PC-9 (cell line): ENCODE measurements at regions of chrX and their contacts with region 1.

Region 1: DNA sequence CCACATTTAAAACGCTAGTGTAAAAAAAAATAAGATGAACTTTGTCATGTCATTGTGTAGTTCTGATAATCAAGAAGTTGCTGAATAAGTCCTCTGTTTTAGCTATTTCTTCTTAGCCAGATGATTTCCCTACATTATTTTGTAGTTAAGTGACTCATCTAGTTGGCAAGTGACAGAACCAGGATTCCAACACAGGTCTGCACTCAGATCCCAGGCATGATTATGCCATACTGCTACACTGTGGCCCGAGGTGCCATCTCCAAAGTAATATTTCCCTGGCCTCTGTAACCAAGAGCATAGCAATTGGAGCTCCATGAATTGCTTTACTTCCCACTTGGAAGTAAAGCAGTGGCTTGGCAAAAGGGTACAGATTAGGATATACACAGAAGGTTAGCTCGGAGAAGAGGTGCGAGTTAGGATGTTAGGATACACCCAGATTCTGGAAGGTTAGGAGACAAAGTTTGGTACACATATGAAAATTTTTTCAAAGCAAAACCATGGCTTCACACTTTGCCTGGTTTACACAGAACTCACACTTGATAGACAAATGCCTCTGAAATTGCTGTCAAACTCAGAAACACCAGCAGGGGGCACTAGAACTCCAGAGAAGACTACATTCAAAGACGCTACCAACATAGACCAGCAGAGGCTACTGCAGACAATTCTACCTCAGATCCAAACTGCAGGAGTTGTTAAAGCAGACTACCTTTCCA is 41.4 kb downstream of the SRPX2 start:
- DNase-seq: peak; percentile 64 to 67
- H3K4me3 ChIP-seq: no peak overlapping the region
- H3K27ac ChIP-seq: no peak overlapping the region
- H3K4me1 ChIP-seq: peaks cover under 1% of the 10 kb centered on the region
- H3K27me3 ChIP-seq: no peaks in the 10 kb centered on the region
- CTCF ChIP-seq: peak; percentile 88

Region 2: GRCh38 chrX:99480728-99481127 is 1204.7 kb before region 1 on chrX:
- CTCF ChIA-PET with region 1: no interaction called
- POLR2A ChIA-PET with region 1: no interaction called
- intact Hi-C with region 1: no loop called
- DNase-seq: no peak
- H3K4me3 ChIP-seq: no peak overlapping the region
- H3K27ac ChIP-seq: no peak overlapping the region
- H3K4me1 ChIP-seq: no peaks in the 10 kb centered on the region
- H3K27me3 ChIP-seq: no peaks in the 10 kb centered on the region
- CTCF ChIP-seq: no peak

Region 3: GRCh38 chrX:100512471-100512870 is 173.0 kb before region 1 on chrX:
- CTCF ChIA-PET with region 1: no interaction called
- POLR2A ChIA-PET with region 1: no interaction called
- intact Hi-C with region 1: loop called (anchors 1 kb)
- DNase-seq: no peak
- H3K4me3 ChIP-seq: no peak overlapping the region
- H3K27ac ChIP-seq: no peak overlapping the region
- H3K4me1 ChIP-seq: no peaks in the 10 kb centered on the region
- H3K27me3 ChIP-seq: no peaks in the 10 kb centered on the region
- CTCF ChIP-seq: peak; percentile 70

Region 4: DNA sequence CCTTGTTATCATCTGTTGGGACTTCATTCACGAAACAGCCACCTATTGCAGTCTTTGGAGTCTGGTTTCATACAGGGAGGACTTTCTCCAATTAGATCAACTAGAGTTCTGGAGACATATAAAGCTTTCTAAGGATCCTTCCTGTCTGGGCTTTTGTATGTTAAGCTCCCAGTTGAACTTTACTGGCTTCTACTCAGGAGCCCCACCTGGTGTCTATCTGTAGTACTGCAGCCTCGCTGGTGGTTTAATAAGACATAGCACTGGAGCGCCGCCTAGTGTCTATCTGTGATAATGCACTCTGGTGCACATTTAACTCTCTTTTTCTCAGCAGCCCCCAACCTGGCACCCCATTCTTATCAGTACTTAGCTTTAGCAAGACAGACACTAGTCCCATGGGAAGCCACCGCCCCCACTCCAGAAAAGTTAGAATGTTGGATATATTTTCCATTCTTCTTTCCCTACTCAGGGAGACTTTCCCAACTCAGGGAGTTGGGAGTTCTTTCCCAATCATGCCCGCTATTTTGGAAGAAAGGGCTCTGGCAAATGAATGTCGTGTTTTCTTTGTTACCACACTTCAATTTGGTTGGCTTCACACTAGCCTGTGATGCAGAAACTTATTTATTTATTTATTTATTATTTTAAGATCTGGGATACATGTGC is 83.4 kb after region 1 on chrX:
- CTCF ChIA-PET with region 1: interaction called, 11 read pairs
- POLR2A ChIA-PET with region 1: no interaction called
- intact Hi-C with region 1: loop called (anchors 1 kb)
- DNase-seq: peak; percentile 47 to 74
- H3K4me3 ChIP-seq: no peak overlapping the region
- H3K27ac ChIP-seq: no peak overlapping the region
- H3K4me1 ChIP-seq: no peaks in the 10 kb centered on the region
- H3K27me3 ChIP-seq: no peaks in the 10 kb centered on the region
- CTCF ChIP-seq: peak; percentile 99